ENCODE measurements at regions of chr17 and their contacts with region 1.

Region 1: DNA sequence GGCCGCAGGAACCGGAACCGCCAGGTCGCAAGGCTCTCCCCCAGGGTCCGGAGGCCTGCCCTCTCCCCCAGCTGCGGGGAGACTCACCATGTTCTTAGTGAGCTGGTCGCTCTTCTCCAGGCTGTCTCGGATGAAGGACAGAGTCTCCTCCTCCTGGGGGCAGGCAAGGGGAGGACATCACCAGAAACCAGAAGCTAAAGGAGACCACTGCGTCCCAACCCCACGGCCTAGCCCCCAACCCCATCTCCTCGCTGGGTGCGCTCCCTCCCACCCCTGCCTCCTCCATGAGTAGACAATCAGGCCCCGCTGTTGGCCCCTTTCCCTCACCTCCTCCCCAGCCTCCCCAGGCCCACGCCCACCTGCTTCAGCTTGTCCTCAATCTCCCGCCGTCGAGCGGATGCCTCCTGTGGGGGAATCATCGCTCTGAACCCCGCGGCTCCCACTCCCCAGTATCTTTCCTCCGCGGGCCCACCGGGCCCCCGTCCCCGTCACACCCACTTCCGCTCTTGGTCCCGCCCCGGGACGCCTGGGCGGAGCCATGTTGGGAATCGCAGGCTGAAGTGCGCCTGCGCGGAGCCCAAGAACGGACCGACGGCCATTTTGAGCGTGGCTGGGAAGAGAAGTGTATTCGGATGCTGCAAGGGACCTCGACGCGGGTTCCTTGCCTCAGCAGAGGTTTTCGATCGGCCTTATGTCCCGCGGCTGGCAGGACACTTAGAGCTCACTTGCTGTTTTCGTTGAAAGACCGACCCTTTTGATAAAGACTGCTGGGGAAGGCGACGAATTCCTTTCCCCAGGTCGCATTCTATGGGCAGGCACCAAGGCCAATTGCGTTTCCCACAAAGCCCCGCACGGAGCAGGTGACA is at the start of gene EXOC7:
- DNase-seq: peak; percentile 99

Region 2: DNA sequence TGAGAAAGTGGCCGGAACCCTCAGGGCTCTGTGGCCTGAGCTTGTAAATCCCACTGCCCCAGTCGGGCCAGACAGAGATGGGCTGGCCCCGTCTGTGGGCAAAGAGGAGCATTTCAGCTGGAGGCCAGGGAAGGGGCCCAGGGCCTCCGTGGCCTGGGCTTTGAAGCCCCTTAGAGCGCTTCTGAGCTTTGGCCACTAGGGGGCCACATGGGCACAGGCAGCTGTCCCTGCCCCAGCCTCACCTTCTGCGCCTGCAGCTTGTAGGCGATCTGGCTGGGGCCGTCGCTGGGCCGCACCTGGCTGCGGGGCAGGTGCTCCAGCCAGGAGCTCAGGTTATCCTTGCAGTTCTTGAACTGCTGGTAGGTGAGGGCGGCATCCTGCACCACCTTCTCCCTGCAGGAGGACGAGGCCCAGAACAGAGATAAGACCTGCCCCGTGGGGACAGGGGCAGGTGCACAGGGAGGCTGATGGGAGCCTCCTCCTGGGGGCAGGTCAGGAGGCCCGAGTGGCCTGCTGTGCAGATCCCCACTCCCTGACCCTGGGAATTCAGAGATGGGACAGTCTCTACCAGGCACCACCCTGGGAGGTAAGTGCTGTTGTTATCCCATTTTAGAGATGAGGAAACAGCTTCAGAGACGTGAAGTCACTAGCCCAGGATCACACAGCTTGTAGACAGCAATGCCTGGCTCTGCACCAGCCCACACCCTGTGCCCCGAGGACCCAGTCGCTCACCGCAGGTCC is 89.2 kb before region 1 on chr17:
- CTCF ChIA-PET with region 1: interaction called, 8 read pairs
- POLR2A ChIA-PET with region 1: interaction called, 10 read pairs
- DNase-seq: peak; percentile 93

Region 3: DNA sequence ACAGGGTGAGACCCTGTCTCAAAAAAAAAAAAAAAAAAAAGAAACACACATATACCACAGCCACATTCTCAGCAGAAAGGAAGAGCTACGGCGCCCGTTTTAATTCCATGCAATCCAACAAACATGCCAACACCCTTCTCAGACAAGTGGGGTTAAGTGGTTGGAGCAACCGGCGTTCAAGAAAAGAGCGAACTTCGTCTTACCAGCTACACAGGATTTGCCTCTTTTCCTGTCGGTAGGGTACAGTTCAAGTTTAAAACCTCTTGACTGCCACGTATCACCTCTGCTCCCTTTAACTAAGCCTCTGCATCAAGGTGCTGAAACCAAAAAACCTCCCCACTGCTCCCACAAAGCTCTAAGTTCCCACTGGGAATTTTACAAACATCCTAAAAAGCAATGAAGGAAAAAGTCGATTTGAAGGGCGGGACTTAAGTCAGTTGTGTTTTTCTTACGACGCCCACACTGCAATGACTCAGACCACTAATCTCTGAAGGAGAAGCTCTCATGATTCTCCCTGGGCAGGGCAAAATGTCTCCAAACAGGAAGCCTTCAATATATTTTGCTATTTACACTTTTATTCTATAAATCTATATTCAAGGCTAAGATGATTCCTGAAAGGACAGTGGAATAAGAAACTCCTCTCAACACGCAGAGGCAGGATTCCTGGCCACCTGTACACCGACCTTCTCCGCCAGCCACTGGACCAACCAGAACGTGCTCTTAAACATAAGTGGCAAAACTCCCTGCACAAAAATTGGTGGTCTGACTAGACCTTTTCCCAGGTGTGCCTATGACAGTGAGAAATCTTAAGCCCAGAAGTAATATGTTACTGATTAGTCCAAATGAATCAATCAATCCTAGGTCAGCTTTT is 50.0 kb before region 1 on chr17:
- CTCF ChIA-PET with region 1: no interaction called
- POLR2A ChIA-PET with region 1: no interaction called
- DNase-seq: no peak

Region 4: GRCh38 chr17:76072148-76072858 is 31.2 kb before region 1 on chr17 and contains the start of gene SRP68:
- CTCF ChIA-PET with region 1: no interaction called
- POLR2A ChIA-PET with region 1: interaction called, 12 read pairs
- DNase-seq: peak; percentile 98

Region 5: GRCh38 chr17:76092526-76093291 is 10.8 kb before region 1 on chr17:
- CTCF ChIA-PET with region 1: interaction called, 3 read pairs
- POLR2A ChIA-PET with region 1: interaction called, 13 read pairs
- DNase-seq: no peak

Region 6: DNA sequence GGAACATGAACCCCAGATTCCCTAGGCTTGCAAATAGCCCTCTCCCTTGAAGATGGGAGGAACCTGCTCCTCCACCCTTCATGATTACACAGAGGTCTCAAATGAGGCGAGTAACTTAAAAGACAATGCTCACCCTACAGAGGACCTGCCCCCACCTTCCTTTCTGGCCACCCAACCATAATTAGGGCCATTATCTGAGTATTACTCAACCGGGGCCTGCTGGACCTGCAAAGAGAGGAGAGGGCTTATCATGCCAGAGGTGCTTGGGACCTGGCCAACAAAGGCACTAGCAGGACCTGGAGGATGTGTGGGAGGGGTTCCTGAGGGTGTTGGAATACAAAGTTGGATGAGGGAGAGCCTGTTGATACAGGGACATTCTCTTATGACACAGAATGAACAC is 94.4 kb after region 1 on chr17:
- CTCF ChIA-PET with region 1: no interaction called
- POLR2A ChIA-PET with region 1: no interaction called
- DNase-seq: no peak

Measured in HEK293T (cell line).